Right cardiac atrium (tissue), 5 donors: ENCODE measurements at regions of chr19 and their contacts with region 1.

Region 1: DNA sequence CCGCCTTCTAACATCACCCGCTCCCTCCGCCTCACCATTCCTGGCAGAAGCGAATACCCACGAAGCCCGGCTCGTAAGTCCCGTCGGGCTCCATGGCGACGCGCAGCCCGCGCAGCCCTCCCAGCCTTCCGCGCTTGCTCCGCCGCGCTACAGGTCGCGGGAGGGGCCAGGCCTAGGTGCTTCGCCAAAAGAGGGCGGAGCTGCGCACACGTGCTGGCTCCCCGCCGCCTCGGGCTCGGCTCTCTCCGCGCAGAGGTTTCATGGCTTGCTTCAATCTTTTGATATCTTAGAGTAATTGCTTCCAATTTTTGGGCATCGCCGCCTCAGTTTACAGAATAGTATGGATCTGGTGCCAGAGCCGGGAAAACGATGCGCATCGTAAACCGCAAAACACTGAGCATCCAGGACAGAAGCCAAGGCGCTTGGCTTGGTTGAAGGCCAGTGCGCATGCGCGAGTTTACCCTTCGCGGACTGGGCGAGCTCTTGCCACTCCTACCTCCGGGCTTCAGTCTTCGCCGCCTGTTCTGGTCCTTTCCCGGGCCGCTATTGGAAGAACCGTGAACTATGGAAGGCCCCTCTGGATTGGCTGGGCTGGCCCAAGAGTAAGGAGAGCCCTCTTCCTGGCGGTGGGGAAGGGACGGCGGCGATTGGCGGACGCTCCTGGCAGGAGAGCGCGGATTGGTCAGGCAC is at the start of gene POLR2I:
- DNase-seq: peak; percentile 99 to 100 (median 99)
- ATAC-seq: peak; percentile 96 to 97
- H3K4me3 ChIP-seq: peak within 1 kb of the TSS; percentile 69
- H3K27ac ChIP-seq: peak within 1 kb of the TSS; percentile 85
- H3K4me1 ChIP-seq: no peaks in the 10 kb centered on the region
- H3K27me3 ChIP-seq: no peaks in the 10 kb centered on the region
- total RNA-seq, gene POLR2I: 96.6 to 140 (median 122) TPM

Region 2: DNA sequence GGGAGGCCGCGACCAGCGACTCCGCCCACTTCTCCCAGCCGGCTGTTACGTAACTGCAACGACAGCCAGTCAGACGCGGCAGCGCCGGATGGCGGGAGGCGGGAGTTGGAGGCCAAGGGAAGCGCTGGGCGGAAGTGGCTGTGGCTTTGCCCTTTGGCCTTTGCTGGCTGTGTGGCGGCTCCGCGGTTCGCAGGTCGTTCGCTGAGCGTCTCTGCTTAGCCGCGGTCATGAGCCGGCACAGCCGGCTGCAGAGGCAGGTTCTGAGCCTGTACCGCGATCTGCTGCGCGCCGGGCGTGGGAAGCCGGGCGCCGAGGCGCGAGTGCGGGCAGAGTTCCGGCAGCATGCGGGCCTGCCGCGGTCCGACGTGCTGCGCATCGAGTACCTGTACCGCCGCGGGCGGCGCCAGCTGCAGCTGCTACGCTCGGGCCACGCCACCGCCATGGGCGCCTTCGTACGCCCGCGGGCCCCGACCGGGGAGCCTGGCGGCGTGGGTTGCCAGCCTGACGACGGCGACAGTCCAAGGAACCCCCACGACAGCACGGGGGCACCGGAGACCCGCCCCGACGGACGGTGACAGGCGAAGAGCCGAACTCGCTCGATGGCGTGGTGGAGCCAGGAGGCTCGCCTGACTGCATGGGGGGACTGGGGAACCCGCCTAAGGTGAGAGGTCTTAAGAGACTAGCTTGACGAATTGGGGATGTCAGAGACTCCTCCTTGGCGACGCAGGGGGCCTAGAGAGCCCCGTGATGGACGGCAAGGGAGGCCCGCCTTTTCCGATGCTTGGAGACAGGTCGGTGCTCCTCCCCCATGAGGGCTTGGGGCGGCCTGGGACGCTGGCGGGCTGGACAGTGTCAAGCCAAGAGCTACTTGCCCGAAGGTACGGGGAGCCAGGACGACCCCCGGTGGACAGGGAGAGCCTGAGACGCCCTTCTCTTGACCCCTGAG is 119.6 kb before region 1 on chr19 and contains the start of gene SDHAF1:
- intact Hi-C with region 1: loop called in 1 of 4 experiments (anchors 10 kb)
- DNase-seq: peak; percentile 98 to 99 (median 99)
- ATAC-seq: peak; percentile 95 to 96
- H3K4me3 ChIP-seq: peak within 1 kb of the TSS; percentile 73
- H3K27ac ChIP-seq: peak within 1 kb of the TSS; percentile 84
- H3K4me1 ChIP-seq: peaks cover 4% of the 10 kb centered on the region
- H3K27me3 ChIP-seq: no peaks in the 10 kb centered on the region
- total RNA-seq, gene SDHAF1: 10.9 to 14.9 (median 13.3) TPM

Region 3: GRCh38 chr19:36032251-36033104 is 82.4 kb before region 1 on chr19 and contains the start of gene CLIP3:
- intact Hi-C with region 1: no loop called
- DNase-seq: peak; percentile 82 to 92 (median 89)
- ATAC-seq: peak; percentile 82 to 87
- H3K4me3 ChIP-seq: peak within 1 kb of the TSS; percentile 75
- H3K27ac ChIP-seq: no peak within 1 kb of the TSS
- H3K4me1 ChIP-seq: peaks cover 2% of the 10 kb centered on the region
- H3K27me3 ChIP-seq: no peaks in the 10 kb centered on the region
- total RNA-seq, gene CLIP3: 8.7 to 11.3 (median 10.3) TPM

Region 4: DNA sequence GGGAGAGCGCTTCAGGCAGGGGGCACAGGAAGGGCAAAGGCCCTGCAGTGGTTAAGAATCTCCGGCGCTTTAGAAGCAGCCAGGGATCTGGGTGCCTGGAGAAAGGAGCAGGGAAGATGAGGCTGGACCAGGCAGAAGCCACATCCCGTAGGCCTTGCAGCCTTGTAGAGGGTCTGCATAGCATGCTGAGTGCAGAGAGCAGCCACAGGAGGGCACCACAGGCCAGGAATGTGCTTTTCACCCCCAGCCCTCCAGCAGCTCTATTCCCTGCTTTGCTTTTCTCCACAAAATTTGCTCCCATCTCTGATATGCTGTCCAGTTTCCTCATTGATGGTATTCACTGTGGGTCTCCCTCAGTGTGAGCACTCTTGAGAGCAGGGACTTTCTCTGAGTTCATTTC is 54.5 kb before region 1 on chr19:
- intact Hi-C with region 1: loop called in 2 of 4 experiments (anchors 5 to 10 kb)
- DNase-seq: peak; percentile 31 to 75 (median 70)
- ATAC-seq: peak; percentile 67 to 73
- H3K4me3 ChIP-seq: no peak overlapping the region
- H3K27ac ChIP-seq: no peak overlapping the region
- H3K4me1 ChIP-seq: no peaks in the 10 kb centered on the region
- H3K27me3 ChIP-seq: no peaks in the 10 kb centered on the region

Region 5: DNA sequence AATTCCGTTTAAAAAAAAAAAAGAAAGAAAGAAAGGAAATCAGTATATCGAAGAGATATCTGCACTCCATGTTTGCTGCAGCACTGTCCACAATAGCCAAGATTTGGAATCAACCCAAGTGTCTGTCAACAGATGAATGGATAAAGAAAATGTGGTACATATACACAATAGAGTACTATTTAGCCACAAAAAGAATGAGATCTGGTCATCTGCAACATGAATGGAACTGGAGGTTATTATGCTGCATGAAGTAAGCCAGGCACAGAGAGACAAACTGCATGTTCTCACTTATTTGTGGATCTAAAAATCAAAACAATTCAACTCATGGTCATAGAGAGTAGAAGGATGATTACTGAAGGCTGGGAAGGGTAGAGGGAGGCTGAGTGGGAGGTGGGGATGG is 83.2 kb after region 1 on chr19:
- intact Hi-C with region 1: no loop called
- DNase-seq: no peak
- ATAC-seq: no peak
- H3K4me3 ChIP-seq: no peak overlapping the region
- H3K27ac ChIP-seq: no peak overlapping the region
- H3K4me1 ChIP-seq: no peaks in the 10 kb centered on the region
- H3K27me3 ChIP-seq: no peaks in the 10 kb centered on the region